GM12878 (cell line): ENCODE measurements at regions of chr1 and their contacts with region 1.

Region 1: DNA sequence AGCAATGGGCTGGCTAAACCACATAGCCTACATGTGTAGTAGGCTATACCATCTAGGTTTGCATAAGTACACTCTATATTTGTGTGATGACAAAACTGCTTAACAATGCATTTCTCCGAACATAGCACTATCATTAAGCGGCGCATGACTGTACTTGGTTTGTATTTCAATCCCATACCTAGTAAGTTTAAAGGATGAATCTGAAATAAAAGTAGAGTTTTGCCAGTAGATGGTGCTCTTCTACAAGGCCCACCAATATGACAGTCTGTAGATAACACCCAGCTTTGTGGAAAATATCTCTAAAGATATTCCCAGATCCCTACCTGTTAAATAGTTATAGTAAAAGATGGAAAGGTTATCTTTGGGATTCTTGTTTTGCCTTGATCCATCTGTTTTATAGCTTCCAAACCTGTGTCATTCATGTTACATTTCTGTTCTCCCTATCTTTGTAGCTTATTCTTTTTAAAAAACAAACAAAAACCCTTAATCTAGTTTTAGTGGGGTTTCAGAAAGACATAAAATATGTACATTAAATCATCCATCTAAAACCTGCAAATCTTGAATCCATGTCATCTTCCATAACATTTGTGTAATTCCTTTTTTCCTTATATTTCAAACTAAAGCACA is 33.9 kb upstream of the ASPM start:
- DNase-seq: no peak
- ATAC-seq: peak; percentile 92
- H3K4me3 ChIP-seq: no peak overlapping the region
- H3K27ac ChIP-seq: no peak overlapping the region
- H3K4me1 ChIP-seq: peaks cover 16% of the 10 kb centered on the region
- H3K27me3 ChIP-seq: no peaks in the 10 kb centered on the region
- CTCF ChIP-seq: peak; percentile 52 to 67 (median 59)
- EP300 ChIP-seq: no peak
- POLR2A ChIP-seq: no peak
- RAD21 ChIP-seq: peak; percentile 88

Region 2: GRCh38 chr1:197143276-197143675 is 37.1 kb before region 1 on chr1:
- CTCF ChIA-PET with region 1: interaction called, 14 read pairs
- POLR2A ChIA-PET with region 1: no interaction called
- RAD21 ChIA-PET with region 1: interaction called, 3 read pairs
- SMC1A ChIA-PET with region 1: interaction called, 5 read pairs
- in situ Hi-C with region 1: no loop called
- intact Hi-C with region 1: no loop called
- DNase-seq: no peak
- ATAC-seq: no peak
- H3K4me3 ChIP-seq: no peak overlapping the region
- H3K27ac ChIP-seq: no peak overlapping the region
- H3K4me1 ChIP-seq: no peaks in the 10 kb centered on the region
- H3K27me3 ChIP-seq: no peaks in the 10 kb centered on the region
- CTCF ChIP-seq: no peak
- EP300 ChIP-seq: no peak
- POLR2A ChIP-seq: no peak
- RAD21 ChIP-seq: no peak

Region 3: DNA sequence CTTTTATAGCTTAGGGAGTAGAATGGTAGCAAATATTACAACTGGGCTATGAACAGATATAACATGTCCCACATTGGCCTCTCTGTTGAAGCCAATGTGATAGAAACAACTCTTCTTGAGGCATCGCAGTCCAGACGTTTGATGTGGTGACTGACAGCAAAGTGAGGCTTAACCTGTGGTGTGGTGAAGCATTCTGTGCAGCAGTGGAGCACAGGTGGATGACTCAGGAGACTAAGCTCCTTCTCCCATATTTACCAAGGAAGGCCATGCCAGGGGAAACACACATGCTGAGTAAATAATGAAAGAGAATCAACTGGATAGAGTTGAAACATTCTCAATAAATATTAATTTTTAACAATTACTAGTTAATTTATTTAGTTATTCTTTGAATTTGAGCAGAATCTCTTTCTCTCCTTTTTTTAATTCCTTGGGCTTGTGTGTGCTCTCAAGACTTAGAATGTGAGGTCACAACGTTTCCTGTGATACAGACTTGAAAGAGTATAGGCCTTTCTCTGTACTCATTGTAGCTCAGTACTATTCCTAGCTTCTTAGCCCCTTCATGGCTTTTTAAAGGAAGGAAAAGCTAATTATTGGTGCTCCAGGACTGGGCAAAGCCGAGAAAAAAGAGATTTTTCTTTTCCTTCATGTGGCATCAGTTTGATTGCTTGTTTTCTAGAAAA is 105.3 kb after region 1 on chr1:
- CTCF ChIA-PET with region 1: interaction called, 11 read pairs
- POLR2A ChIA-PET with region 1: no interaction called
- RAD21 ChIA-PET with region 1: no interaction called
- SMC1A ChIA-PET with region 1: interaction called, 3 read pairs
- in situ Hi-C with region 1: no loop called
- intact Hi-C with region 1: no loop called
- DNase-seq: no peak
- ATAC-seq: no peak
- H3K4me3 ChIP-seq: no peak overlapping the region
- H3K27ac ChIP-seq: no peak overlapping the region
- H3K4me1 ChIP-seq: no peaks in the 10 kb centered on the region
- H3K27me3 ChIP-seq: no peaks in the 10 kb centered on the region
- CTCF ChIP-seq: no peak
- EP300 ChIP-seq: no peak
- POLR2A ChIP-seq: no peak
- RAD21 ChIP-seq: no peak

Region 4: GRCh38 chr1:197336571-197336970 is 156.2 kb after region 1 on chr1:
- CTCF ChIA-PET with region 1: interaction called, 22 read pairs
- POLR2A ChIA-PET with region 1: no interaction called
- RAD21 ChIA-PET with region 1: interaction called, 16 read pairs
- SMC1A ChIA-PET with region 1: interaction called, 14 read pairs
- in situ Hi-C with region 1: no loop called
- intact Hi-C with region 1: loop called (anchors 1 kb)
- DNase-seq: no peak
- ATAC-seq: no peak
- H3K4me3 ChIP-seq: no peak overlapping the region
- H3K27ac ChIP-seq: no peak overlapping the region
- H3K4me1 ChIP-seq: no peaks in the 10 kb centered on the region
- H3K27me3 ChIP-seq: no peaks in the 10 kb centered on the region; a peak in 1 of 4 replicates
- CTCF ChIP-seq: no peak
- EP300 ChIP-seq: no peak
- POLR2A ChIP-seq: no peak
- RAD21 ChIP-seq: no peak

Region 5: GRCh38 chr1:197356723-197357533 is 176.6 kb after region 1 on chr1:
- CTCF ChIA-PET with region 1: interaction called, 171 read pairs
- POLR2A ChIA-PET with region 1: interaction called, 4 read pairs
- RAD21 ChIA-PET with region 1: interaction called, 74 read pairs
- SMC1A ChIA-PET with region 1: interaction called, 62 read pairs
- in situ Hi-C with region 1: no loop called
- intact Hi-C with region 1: loop called (anchors 1 kb)
- DNase-seq: no peak
- ATAC-seq: peak; percentile 90
- H3K4me3 ChIP-seq: no peak overlapping the region
- H3K27ac ChIP-seq: no peak overlapping the region
- H3K4me1 ChIP-seq: no peaks in the 10 kb centered on the region
- H3K27me3 ChIP-seq: no peaks in the 10 kb centered on the region
- CTCF ChIP-seq: peak; percentile 59 to 72 (median 59)
- EP300 ChIP-seq: no peak
- POLR2A ChIP-seq: no peak
- RAD21 ChIP-seq: peak; percentile 89